ENCODE measurements at regions of chr9 and their contacts with region 1.

Region 1: DNA sequence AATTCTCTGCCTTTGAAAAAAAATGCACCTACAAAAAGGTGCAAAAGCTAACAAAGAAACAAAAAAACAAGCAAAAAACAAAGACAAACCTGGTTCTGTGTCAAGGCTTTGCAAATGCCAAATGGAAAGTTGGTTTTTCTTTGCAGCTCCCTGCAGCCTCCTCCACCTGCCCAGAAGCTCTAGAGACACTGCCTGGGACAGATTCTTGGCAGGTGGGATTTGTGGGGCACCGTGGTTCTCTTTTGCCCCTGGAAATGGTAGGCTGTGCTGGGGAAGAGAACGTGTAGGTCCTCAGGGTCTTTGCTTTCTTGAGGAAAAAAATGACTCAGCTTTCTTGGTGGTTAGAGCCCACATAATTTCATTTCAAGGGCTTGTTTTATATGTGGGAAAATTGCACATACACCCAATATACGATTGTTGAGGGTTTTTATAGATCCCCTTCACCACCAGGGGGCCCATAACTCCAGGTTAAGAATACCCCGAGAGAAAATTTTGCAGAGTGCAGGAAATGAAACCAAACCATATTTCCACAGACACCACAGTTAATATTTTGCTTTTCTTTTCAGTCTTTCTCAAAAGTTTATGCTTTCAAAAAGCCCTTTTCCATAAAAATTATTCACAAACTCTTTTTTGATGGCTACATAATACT is 58.7 kb downstream of the NXNL2 start:
- DNase-seq: peak; percentile 71
- H3K4me3 ChIP-seq: no peak overlapping the region
- H3K27ac ChIP-seq: no peak overlapping the region
- H3K4me1 ChIP-seq: no peaks in the 10 kb centered on the region
- CTCF ChIP-seq: peak; percentile 86

Region 2: DNA sequence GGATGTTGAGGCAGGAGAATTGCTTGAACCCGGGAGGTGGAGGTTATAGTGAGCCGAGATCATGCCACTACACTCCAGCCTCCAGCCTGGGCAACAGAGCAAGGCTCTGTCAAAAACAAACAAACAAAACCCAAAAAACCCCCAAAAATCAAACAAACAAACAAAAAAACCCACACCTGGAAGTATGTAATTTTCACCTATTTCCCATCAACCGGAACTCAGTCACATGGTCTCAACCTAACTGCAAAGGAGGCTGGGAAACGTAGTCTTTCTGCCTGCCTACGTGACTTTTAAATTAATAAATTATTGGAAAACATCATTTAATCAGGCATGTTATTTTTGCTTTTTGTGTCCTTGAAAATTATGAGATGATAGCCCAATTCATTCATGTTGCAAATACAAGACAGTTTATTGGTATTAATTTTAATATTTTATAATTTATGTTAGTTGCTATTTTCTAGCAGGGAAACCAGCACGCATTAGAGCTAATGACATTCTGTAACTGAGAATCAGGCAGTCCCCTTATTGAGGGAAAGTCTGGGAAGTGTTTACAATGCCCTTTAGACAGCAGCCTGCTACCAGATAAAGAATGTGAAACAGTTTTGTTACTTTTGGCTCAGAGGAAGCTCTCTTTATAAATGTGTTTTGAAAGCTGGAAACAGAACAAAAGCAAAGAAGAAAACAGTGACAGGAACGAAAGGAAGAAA is 51.7 kb after region 1 on chr9:
- CTCF ChIA-PET with region 1: no interaction called
- POLR2A ChIA-PET with region 1: no interaction called
- intact Hi-C with region 1: no loop called
- DNase-seq: no peak
- H3K4me3 ChIP-seq: no peak overlapping the region
- H3K27ac ChIP-seq: no peak overlapping the region
- H3K4me1 ChIP-seq: no peaks in the 10 kb centered on the region
- CTCF ChIP-seq: no peak

Region 3: DNA sequence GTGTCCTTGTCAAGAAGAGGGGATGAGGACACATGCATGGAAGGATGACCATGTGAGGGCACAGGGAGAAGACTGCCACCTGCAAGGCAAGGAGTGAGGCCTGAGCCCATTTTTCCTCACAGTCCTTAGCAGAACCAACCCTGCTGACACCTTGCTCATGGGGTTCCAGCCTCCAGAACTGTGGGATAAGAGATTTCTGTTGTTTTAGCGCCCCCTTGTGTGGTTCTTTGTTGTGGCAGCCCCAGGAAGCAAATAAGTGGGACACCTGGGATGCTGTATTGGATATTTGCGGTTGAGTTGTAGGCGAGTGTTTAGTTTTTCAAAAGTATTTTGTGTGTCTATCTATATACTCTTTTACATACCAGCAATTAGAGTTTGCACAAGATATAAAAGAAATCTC is 147.7 kb after region 1 on chr9:
- CTCF ChIA-PET with region 1: no interaction called
- POLR2A ChIA-PET with region 1: no interaction called
- intact Hi-C with region 1: loop called (anchors 5 kb)
- DNase-seq: peak; percentile 18
- H3K4me3 ChIP-seq: no peak overlapping the region
- H3K27ac ChIP-seq: no peak overlapping the region
- H3K4me1 ChIP-seq: no peaks in the 10 kb centered on the region
- CTCF ChIP-seq: peak; percentile 79

Region 4: DNA sequence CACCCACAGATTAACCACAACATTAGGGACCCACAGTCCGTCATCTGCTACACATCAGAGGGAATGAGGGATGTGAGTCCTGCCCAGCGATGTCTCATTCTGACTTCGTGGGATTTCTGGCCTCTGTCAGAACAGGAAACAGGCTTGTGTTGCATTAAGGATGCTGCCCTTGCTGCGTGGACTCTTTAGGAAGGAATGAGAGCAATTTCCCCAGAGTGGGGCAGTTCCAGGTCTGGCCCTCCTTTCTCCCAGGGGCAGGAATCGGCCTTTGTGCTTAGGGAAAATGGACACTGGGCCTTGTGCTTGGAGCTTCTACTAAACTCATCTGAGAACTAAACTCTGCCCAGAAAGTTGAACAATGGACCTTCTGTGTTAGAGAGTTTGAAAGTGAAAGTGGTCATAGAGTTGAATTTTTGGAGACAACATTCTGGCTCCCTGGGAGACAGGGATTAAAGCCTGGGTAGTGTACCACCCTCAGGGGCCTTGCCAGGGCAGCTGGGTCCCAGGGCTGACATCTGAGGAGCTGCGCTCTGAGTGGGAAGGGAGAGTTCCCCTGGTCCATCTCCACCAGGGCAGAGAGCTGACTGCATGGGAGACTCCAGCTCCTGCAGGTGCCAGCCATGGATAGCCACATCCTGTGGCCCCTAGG is 359.8 kb after region 1 on chr9:
- CTCF ChIA-PET with region 1: no interaction called
- POLR2A ChIA-PET with region 1: no interaction called
- intact Hi-C with region 1: no loop called
- DNase-seq: no peak
- H3K4me3 ChIP-seq: no peak overlapping the region
- H3K27ac ChIP-seq: no peak overlapping the region
- H3K4me1 ChIP-seq: no peaks in the 10 kb centered on the region
- CTCF ChIP-seq: no peak

Region 5: DNA sequence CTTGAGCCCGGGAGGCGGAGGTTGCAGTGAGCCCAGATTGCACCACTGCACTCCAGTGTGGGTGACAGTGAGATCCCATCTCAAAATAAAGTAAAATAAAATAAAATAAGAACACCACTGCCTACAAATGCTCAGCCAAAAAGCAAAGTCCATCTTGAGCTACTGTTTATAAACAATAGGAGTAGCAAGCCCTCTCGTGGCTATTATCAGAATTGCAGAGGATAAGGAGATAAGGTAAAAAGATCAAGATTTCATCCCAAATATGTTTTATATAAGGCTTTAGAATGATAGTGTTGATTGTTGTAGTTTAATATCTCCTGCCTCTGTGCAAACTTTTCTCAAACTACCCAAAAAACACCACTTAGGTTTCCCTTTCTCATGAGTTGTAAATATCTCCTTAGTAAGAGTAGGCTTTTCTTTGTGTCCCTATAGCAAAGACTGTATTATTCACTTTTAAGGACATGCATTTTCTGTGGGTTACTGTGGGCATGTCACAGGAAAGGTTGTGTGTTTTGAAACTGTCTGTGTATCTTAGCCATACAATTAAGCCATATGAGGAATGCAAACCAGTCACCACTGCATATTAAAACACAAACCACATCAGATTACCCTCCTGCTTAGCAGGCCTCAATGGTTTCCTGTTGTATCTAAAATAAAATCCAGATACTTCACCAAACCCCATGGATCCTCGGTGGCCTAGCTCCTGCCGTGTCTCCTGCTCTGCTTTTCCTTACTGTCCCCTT is 685.5 kb after region 1 on chr9:
- CTCF ChIA-PET with region 1: no interaction called
- POLR2A ChIA-PET with region 1: no interaction called
- intact Hi-C with region 1: loop called (anchors 2 kb)
- DNase-seq: peak; percentile 65
- H3K4me3 ChIP-seq: no peak overlapping the region
- H3K27ac ChIP-seq: no peak overlapping the region
- H3K4me1 ChIP-seq: no peaks in the 10 kb centered on the region
- CTCF ChIP-seq: peak; percentile 89